ENCODE measurements at regions of chr22 and their contacts with region 1.

Region 1: DNA sequence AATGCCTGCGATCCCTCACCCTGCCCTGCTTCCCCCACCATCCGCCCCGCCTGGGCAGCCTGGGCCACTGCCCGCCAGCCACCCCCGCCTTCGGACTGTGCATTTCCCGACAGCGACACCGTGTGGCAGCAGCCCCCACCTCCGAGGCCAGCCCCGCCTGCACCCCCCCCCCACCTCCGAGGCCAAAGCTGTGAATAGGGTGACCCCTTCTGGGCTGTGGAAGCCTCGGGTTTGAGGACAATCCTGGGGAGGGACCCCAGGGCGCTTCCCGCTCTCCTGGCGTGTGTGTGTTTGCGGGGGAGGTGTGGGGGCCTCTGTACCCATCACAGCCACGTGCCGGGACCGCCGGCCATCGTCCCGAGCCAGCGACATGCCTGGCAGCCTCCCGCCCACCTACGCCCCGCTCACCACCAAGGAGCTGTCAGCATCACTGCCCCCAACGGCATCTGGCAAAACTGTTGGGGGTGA is 33.8 kb upstream of the PPARA start:
- DNase-seq: peak; percentile 89
- ATAC-seq: peak; percentile 93
- H3K4me3 Mint-ChIP-seq: no peak overlapping the region
- H3K27ac Mint-ChIP-seq: no peak overlapping the region
- H3K4me1 Mint-ChIP-seq: peaks cover 3% of the 10 kb centered on the region
- H3K27me3 Mint-ChIP-seq: no peaks in the 10 kb centered on the region

Region 2: DNA sequence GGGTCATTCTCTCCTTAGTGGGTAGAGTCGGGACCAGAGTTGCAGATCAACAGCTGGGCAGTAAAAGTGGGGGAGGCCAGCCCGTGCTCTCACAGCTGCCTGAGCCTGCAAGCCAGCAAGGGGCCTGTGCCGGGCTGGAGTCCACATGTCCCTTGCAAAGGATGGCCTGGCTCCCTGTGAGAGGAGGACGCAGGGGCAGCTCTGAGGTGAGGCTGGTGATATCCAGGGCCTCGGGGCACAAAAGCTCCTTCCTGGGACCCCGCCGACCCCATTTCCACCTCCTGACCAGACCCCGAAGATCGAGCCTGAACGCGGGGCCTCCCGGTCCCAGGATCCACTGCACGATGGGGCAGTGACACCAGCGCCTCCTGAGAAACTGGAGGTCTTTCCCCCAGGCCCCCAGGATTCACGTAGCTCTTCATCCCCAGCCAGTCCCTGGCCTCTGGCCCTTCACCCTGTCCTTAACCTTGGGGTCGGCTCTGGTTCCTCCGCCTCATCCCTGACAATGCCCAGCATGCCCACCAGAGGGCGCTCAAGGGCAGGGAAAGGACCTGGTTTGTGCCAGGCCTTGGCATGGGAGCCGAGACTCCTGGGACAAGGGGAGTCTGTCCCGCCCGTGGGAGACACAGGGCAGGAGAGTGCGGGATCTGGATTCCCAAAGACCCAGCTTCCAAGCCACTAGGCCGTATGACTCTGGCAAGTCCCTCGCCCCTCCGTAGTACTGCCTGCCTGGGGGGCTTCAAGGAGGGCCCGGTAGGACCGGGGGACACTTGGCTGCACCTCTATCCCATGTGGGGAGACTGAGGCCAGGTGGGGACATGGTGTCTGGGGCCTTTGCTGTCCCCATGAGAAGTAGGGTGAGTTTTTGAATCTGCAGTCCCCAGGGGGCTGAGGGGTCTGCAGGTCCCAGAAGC is 121.8 kb before region 1 on chr22:
- CTCF ChIA-PET with region 1: interaction called, 49 read pairs
- DNase-seq: peak; percentile 79
- ATAC-seq: no peak
- H3K4me3 Mint-ChIP-seq: no peak overlapping the region
- H3K27ac Mint-ChIP-seq: no peak overlapping the region
- H3K4me1 Mint-ChIP-seq: peaks cover 5% of the 10 kb centered on the region
- H3K27me3 Mint-ChIP-seq: peaks cover 7% of the 10 kb centered on the region

Region 3: GRCh38 chr22:46013460-46014416 is 102.8 kb before region 1 on chr22:
- CTCF ChIA-PET with region 1: interaction called, 223 read pairs
- DNase-seq: peak; percentile 90
- ATAC-seq: peak; percentile 99
- H3K4me3 Mint-ChIP-seq: peak overlapping the region; percentile 78
- H3K27ac Mint-ChIP-seq: peak overlapping the region; percentile 82
- H3K4me1 Mint-ChIP-seq: peaks cover 6% of the 10 kb centered on the region
- H3K27me3 Mint-ChIP-seq: peaks cover 2% of the 10 kb centered on the region

Region 4: GRCh38 chr22:46023558-46023981 is 93.0 kb before region 1 on chr22:
- CTCF ChIA-PET with region 1: interaction called, 13 read pairs
- DNase-seq: no peak
- ATAC-seq: no peak
- H3K4me3 Mint-ChIP-seq: no peak overlapping the region
- H3K27ac Mint-ChIP-seq: no peak overlapping the region
- H3K4me1 Mint-ChIP-seq: peaks cover 2% of the 10 kb centered on the region
- H3K27me3 Mint-ChIP-seq: peaks cover 26% of the 10 kb centered on the region